PC-9 (cell line): ENCODE measurements at regions of chr20 and their contacts with region 1.

Region 1: GRCh38 chr20:50987592-50988210 is 29.1 kb downstream of the MOCS3 start:
- DNase-seq: peak; percentile 73
- H3K4me3 ChIP-seq: no peak overlapping the region
- H3K27ac ChIP-seq: no peak overlapping the region
- H3K4me1 ChIP-seq: no peaks in the 10 kb centered on the region
- H3K27me3 ChIP-seq: 0 out of 2 replicates have a peak, but pooled peaks cover 7% of the 10 kb centered on the region
- CTCF ChIP-seq: peak; percentile 98

Region 2: GRCh38 chr20:51306503-51307358 is 319.0 kb after region 1 on chr20:
- CTCF ChIA-PET with region 1: interaction called, 7 read pairs
- POLR2A ChIA-PET with region 1: no interaction called
- intact Hi-C with region 1: loop called (anchors 1 kb)
- DNase-seq: peak in 1 of 2 experiments; percentile 76
- H3K4me3 ChIP-seq: no peak overlapping the region
- H3K27ac ChIP-seq: no peak overlapping the region
- H3K4me1 ChIP-seq: peaks cover 16% of the 10 kb centered on the region
- H3K27me3 ChIP-seq: peaks cover 6% of the 10 kb centered on the region; the same call in 1 of the 2 replicates
- CTCF ChIP-seq: peak; percentile 97

Region 3: GRCh38 chr20:51412333-51412871 is 424.7 kb after region 1 on chr20:
- CTCF ChIA-PET with region 1: no interaction called
- POLR2A ChIA-PET with region 1: no interaction called
- intact Hi-C with region 1: no loop called
- DNase-seq: no peak
- H3K4me3 ChIP-seq: no peak overlapping the region
- H3K27ac ChIP-seq: no peak overlapping the region
- H3K4me1 ChIP-seq: no peaks in the 10 kb centered on the region
- H3K27me3 ChIP-seq: no peaks in the 10 kb centered on the region
- CTCF ChIP-seq: no peak

Region 4: GRCh38 chr20:51541189-51542032 is 553.7 kb after region 1 on chr20:
- CTCF ChIA-PET with region 1: interaction called, 12 read pairs
- POLR2A ChIA-PET with region 1: no interaction called
- intact Hi-C with region 1: no loop called
- DNase-seq: peak in 1 of 2 experiments; percentile 35
- H3K4me3 ChIP-seq: peak overlapping the region; percentile 90
- H3K27ac ChIP-seq: no peak overlapping the region
- H3K4me1 ChIP-seq: peaks cover 12% of the 10 kb centered on the region
- H3K27me3 ChIP-seq: peaks cover 22% of the 10 kb centered on the region
- CTCF ChIP-seq: no peak

Region 5: GRCh38 chr20:51624157-51624731 is 636.5 kb after region 1 on chr20:
- CTCF ChIA-PET with region 1: interaction called, 8 read pairs
- POLR2A ChIA-PET with region 1: no interaction called
- intact Hi-C with region 1: loop called (anchors 1 kb)
- DNase-seq: peak; percentile 53 to 76
- H3K4me3 ChIP-seq: no peak overlapping the region
- H3K27ac ChIP-seq: no peak overlapping the region
- H3K4me1 ChIP-seq: no peaks in the 10 kb centered on the region
- H3K27me3 ChIP-seq: no peaks in the 10 kb centered on the region
- CTCF ChIP-seq: peak; percentile 87

Region 6: DNA sequence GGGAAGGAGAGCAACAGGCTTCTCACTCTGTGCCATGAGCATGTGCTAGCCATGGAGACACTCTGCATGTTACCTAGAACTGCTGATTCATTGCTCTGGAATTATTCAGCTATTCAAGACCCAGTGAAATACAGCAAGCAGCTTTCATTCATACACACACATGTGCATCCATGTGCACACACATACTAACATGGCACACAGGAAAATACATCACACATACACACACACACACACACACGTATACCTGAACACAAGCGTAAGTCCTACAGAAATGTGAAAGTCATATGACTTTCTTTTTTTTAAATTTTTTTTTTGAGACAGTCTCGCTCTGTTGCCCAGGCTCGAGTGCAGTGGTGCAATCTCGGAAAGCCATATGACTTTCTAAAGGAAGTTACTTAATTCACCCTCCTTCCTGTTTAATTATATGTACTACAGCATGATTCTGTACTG is 663.0 kb after region 1 on chr20:
- CTCF ChIA-PET with region 1: no interaction called
- POLR2A ChIA-PET with region 1: no interaction called
- intact Hi-C with region 1: no loop called
- DNase-seq: no peak
- H3K4me3 ChIP-seq: no peak overlapping the region
- H3K27ac ChIP-seq: no peak overlapping the region
- H3K4me1 ChIP-seq: no peaks in the 10 kb centered on the region
- H3K27me3 ChIP-seq: no peaks in the 10 kb centered on the region
- CTCF ChIP-seq: no peak

Region 7: DNA sequence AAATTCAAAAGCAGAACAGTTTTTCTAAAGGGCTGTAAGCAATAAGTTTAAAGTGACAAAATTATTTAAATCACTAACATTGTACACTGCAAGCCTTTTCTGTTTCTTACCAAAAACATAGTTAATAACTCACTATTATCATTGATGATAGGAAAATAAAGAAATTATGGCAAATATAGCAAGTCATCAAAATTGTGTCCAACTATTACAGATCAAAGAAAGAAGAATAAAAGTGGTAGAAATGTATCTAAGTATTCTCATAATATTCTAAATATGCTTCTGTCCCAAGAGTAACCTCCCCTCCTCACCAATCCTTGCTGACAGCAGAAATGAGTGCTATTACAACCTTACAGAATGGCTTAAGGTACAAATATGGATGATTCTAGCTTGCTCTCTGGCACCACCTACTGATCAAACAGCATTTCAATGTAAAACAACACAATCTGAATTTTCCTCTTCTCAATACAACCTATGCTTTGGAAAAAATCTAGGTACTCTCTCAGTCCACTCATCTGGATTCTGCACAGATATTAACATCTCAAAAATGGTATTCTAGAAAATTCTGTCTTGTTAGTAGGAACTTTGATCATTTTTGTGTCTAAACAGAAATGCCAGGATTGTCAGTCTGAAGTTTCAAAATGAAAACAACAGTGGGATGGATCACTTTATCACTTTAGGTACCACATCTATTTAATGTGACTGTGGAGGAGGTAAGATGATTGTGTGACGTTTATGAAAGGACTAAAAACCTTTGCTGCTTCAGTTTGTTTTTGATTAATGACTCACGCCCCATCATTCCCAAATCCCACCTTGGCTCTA is 1162.9 kb after region 1 on chr20:
- CTCF ChIA-PET with region 1: no interaction called
- POLR2A ChIA-PET with region 1: no interaction called
- intact Hi-C with region 1: loop called (anchors 1 kb)
- DNase-seq: peak in 1 of 2 experiments; percentile 9
- H3K4me3 ChIP-seq: no peak overlapping the region
- H3K27ac ChIP-seq: no peak overlapping the region
- H3K4me1 ChIP-seq: no peaks in the 10 kb centered on the region
- H3K27me3 ChIP-seq: no peaks in the 10 kb centered on the region
- CTCF ChIP-seq: peak; percentile 90